ENCODE measurements at regions of chr11 and their contacts with region 1.

Region 1: DNA sequence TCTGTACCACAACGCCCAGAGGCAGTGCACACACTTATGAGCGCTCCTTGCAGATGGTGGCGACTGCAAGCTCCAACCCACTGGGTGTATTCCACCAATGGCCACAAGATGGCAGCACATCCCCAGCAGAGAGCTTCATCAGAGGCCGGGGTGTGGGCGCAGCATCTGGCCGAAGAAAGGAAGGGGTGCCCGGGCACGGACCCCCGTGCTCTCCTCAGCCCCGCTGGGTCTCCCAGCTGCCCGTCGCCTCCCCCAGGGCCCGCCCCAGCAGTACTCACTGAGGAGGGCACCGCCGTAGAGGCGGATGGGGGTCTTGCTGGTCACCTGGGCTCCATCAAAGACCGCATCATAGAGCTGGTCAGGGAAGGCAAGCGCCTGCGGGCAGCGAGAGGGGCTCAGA is 14.2 kb downstream of the TP53I11 start:
- DNase-seq: peak; percentile 81 to 89
- H3K4me3 ChIP-seq: no peak overlapping the region
- H3K4me3 Mint-ChIP-seq: no peak overlapping the region
- H3K27ac Mint-ChIP-seq: no peak overlapping the region
- H3K4me1 ChIP-seq: no peaks in the 10 kb centered on the region
- H3K4me1 Mint-ChIP-seq: no peaks in the 10 kb centered on the region
- H3K27me3 ChIP-seq: no peaks in the 10 kb centered on the region
- H3K27me3 Mint-ChIP-seq: no peaks in the 10 kb centered on the region
- CTCF ChIP-seq: peak; percentile 93 to 95

Region 2: GRCh38 chr11:44893846-44894617 is 42.5 kb before region 1 on chr11:
- CTCF ChIA-PET with region 1: no interaction called
- POLR2A ChIA-PET with region 1: no interaction called
- intact Hi-C with region 1: no loop called
- DNase-seq: peak; percentile 59 to 72
- H3K4me3 ChIP-seq: no peak overlapping the region
- H3K4me3 Mint-ChIP-seq: no peak overlapping the region
- H3K27ac Mint-ChIP-seq: no peak overlapping the region
- H3K4me1 ChIP-seq: no peaks in the 10 kb centered on the region
- H3K4me1 Mint-ChIP-seq: no peaks in the 10 kb centered on the region
- H3K27me3 ChIP-seq: no peaks in the 10 kb centered on the region
- H3K27me3 Mint-ChIP-seq: peaks cover 7% of the 10 kb centered on the region
- CTCF ChIP-seq: peak; percentile 87 to 94

Region 3: DNA sequence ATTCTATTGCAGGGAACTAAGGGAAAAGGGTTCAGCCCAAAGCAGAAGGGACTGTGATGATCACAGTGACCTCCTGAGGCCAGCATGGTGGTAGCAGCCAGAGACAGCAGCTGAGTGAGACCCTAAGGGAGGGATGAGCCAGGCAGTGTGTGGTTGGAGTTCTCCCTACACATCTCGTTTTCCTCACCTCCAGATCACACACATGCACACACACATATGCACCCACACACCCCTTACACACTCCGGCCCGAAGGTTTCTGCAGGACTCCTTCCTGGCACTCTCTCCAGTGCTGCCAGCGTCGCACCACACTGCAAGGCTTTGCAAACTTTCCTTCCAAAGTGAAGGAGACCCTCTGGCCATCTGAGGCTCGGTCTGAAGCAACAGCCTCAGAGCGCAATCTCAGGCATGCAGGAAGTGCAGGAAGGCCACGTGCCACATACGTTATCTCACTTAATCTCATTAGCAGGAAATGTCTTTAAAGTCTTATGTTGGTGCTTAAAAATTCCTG is 41.0 kb after region 1 on chr11:
- CTCF ChIA-PET with region 1: no interaction called
- POLR2A ChIA-PET with region 1: no interaction called
- intact Hi-C with region 1: loop called (anchors 5 kb)
- DNase-seq: no peak
- H3K4me3 ChIP-seq: no peak overlapping the region
- H3K4me3 Mint-ChIP-seq: no peak overlapping the region
- H3K27ac Mint-ChIP-seq: no peak overlapping the region
- H3K4me1 ChIP-seq: peaks cover 9% of the 10 kb centered on the region
- H3K4me1 Mint-ChIP-seq: peaks cover 12% of the 10 kb centered on the region
- H3K27me3 ChIP-seq: no peaks in the 10 kb centered on the region
- H3K27me3 Mint-ChIP-seq: no peaks in the 10 kb centered on the region
- CTCF ChIP-seq: peak in 1 of 2 experiments; percentile 27

Region 4: DNA sequence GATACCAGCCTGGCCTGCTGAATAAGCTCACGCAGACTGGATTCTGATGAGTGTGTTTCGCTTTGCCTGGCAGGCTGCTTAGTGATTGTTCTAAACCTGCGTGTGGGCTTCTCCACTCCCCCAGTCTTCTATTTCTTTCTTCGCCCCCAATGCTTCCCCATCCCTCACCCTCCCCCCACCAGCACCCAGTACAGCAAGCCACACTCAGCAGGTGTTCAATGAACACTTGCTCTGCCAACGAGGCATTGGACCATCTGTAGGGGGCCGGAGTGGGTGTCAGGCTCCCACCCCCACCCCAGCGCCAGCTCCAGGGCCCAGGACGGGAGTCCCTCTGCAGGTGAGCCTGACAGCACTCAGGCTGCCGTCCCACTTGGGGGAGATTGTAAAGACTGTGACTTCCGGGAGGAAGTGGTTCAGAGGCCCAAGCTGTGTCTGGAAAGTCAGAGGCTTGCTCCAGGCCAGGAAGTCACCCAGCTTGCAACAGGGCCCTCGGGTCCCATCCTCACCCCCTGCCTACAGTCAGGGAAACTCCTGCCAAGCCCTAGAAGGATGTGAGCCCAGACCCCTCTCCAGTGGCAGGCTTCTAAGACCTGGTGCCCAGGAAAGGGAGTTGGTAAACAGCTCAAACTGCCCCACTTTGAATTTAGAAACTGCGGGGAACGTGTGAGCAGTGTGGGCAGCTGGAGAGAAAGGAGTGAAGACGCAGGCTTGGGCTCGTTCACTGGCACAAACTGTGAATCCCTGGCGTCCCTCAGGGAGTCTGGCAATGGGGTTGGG is 143.6 kb after region 1 on chr11:
- CTCF ChIA-PET with region 1: interaction called, 3 read pairs
- POLR2A ChIA-PET with region 1: no interaction called
- intact Hi-C with region 1: loop called (anchors 5 kb)
- DNase-seq: no peak
- H3K4me3 ChIP-seq: no peak overlapping the region
- H3K4me3 Mint-ChIP-seq: no peak overlapping the region
- H3K27ac Mint-ChIP-seq: no peak overlapping the region
- H3K4me1 ChIP-seq: no peaks in the 10 kb centered on the region
- H3K4me1 Mint-ChIP-seq: no peaks in the 10 kb centered on the region
- H3K27me3 ChIP-seq: no peaks in the 10 kb centered on the region
- H3K27me3 Mint-ChIP-seq: peaks cover 12% of the 10 kb centered on the region
- CTCF ChIP-seq: no peak

Region 5: GRCh38 chr11:45110562-45110961 is 174.0 kb after region 1 on chr11:
- CTCF ChIA-PET with region 1: interaction called, 168 read pairs
- POLR2A ChIA-PET with region 1: no interaction called
- intact Hi-C with region 1: no loop called
- DNase-seq: peak in 1 of 2 experiments; percentile 75
- H3K4me3 ChIP-seq: no peak overlapping the region
- H3K4me3 Mint-ChIP-seq: no peak overlapping the region
- H3K27ac Mint-ChIP-seq: no peak overlapping the region
- H3K4me1 ChIP-seq: peaks cover 9% of the 10 kb centered on the region; the same call in 1 of the 2 replicates
- H3K4me1 Mint-ChIP-seq: no peaks in the 10 kb centered on the region
- H3K27me3 ChIP-seq: no peaks in the 10 kb centered on the region
- H3K27me3 Mint-ChIP-seq: peaks cover 14% of the 10 kb centered on the region
- CTCF ChIP-seq: peak; percentile 74 to 86

Region 6: GRCh38 chr11:45339729-45340519 is 403.4 kb after region 1 on chr11:
- CTCF ChIA-PET with region 1: no interaction called
- POLR2A ChIA-PET with region 1: no interaction called
- intact Hi-C with region 1: loop called (anchors 10 kb)
- DNase-seq: peak; percentile 95 to 96
- H3K4me3 ChIP-seq: no peak overlapping the region
- H3K4me3 Mint-ChIP-seq: peak overlapping the region; percentile 25
- H3K27ac Mint-ChIP-seq: no peak overlapping the region
- H3K4me1 ChIP-seq: no peaks in the 10 kb centered on the region
- H3K4me1 Mint-ChIP-seq: peaks cover 11% of the 10 kb centered on the region
- H3K27me3 ChIP-seq: no peaks in the 10 kb centered on the region; the same call in 1 of the 2 replicates
- H3K27me3 Mint-ChIP-seq: peaks cover 23% of the 10 kb centered on the region
- CTCF ChIP-seq: peak; percentile 89

Measured in Caco-2 (cell line).